ENCODE measurements at regions of chr14 and their contacts with region 1.

Region 1: GRCh38 chr14:63727774-63728728 is at the start of gene SGPP1:
- DNase-seq: no peak
- ATAC-seq: peak; percentile 84
- H3K4me3 ChIP-seq: peak within 1 kb of the TSS; percentile 91
- H3K27ac ChIP-seq: peak within 1 kb of the TSS; percentile 60
- H3K4me1 ChIP-seq: peaks cover 3% of the 10 kb centered on the region; the same call in 1 of the 2 replicates
- H3K27me3 ChIP-seq: no peaks in the 10 kb centered on the region
- CTCF ChIP-seq: peak; percentile 39 to 59 (median 49); a peak in 5 of 6 replicates
- EP300 ChIP-seq: peak in 1 of 2 experiments; percentile 12; a peak in 1 of 4 replicates
- POLR2A ChIP-seq: peak; percentile 92
- RAD21 ChIP-seq: peak; percentile 49
- polyA plus RNA-seq, gene SGPP1: 8.8 to 17.1 TPM

Region 2: GRCh38 chr14:63388763-63389431 is 339.2 kb before region 1 on chr14:
- CTCF ChIA-PET with region 1: interaction called, 11 read pairs
- POLR2A ChIA-PET with region 1: no interaction called
- RAD21 ChIA-PET with region 1: interaction called, 9 read pairs
- SMC1A ChIA-PET with region 1: interaction called, 5 read pairs
- in situ Hi-C with region 1: no loop called
- intact Hi-C with region 1: loop called (anchors 5 kb)
- DNase-seq: peak; percentile 24
- ATAC-seq: peak; percentile 98
- H3K4me3 ChIP-seq: no peak overlapping the region
- H3K27ac ChIP-seq: no peak overlapping the region
- H3K4me1 ChIP-seq: peaks cover 2% of the 10 kb centered on the region; the same call in 1 of the 2 replicates
- H3K27me3 ChIP-seq: no peaks in the 10 kb centered on the region
- CTCF ChIP-seq: peak; percentile 88 to 89 (median 88)
- EP300 ChIP-seq: no peak
- POLR2A ChIP-seq: no peak
- RAD21 ChIP-seq: peak; percentile 96

Region 3: DNA sequence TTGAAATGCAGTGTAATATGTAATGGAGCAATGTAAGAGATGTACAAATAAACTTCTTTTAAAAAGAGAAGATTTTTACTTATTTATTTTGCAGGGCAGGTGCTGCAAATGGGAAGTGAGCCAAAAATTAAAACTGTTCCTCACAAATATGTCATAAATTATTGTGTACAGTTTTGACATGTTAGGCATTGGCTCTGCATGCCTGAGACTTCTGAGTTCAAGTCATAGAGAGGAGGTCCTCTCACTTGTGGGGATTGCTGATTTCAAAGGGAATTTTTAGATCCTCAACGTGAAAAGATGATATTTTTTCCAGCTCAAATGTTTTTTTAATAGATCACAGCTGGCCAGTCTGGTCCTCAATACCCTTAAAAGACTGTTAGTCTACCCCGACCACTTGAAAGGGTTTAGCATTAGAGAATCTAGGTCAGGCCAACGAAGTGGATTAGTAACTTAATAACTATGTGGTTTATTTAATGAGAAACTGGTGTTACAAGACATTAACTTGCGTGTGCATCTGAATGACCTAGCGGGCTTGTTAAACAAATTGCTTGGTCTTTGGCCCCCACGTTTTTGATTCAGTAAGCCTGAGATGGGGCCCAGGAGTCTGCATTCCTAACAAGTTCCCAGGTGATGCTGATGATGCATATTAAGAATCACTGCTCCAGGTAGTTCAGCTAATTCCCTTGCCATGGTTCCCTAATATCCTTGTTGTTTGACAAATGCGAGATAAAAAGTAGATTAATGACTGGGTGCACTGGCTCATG is 55.5 kb before region 1 on chr14:
- CTCF ChIA-PET with region 1: interaction called, 4 read pairs
- POLR2A ChIA-PET with region 1: interaction called, 5 read pairs
- RAD21 ChIA-PET with region 1: interaction called, 7 read pairs
- SMC1A ChIA-PET with region 1: interaction called, 17 read pairs
- in situ Hi-C with region 1: no loop called
- intact Hi-C with region 1: no loop called
- DNase-seq: peak; percentile 62
- ATAC-seq: peak; percentile 90
- H3K4me3 ChIP-seq: no peak overlapping the region
- H3K27ac ChIP-seq: no peak overlapping the region
- H3K4me1 ChIP-seq: no peaks in the 10 kb centered on the region
- H3K27me3 ChIP-seq: no peaks in the 10 kb centered on the region
- CTCF ChIP-seq: no peak
- EP300 ChIP-seq: peak; percentile 41 to 73; a peak in 2 of 4 replicates
- POLR2A ChIP-seq: no peak
- RAD21 ChIP-seq: no peak

Region 4: DNA sequence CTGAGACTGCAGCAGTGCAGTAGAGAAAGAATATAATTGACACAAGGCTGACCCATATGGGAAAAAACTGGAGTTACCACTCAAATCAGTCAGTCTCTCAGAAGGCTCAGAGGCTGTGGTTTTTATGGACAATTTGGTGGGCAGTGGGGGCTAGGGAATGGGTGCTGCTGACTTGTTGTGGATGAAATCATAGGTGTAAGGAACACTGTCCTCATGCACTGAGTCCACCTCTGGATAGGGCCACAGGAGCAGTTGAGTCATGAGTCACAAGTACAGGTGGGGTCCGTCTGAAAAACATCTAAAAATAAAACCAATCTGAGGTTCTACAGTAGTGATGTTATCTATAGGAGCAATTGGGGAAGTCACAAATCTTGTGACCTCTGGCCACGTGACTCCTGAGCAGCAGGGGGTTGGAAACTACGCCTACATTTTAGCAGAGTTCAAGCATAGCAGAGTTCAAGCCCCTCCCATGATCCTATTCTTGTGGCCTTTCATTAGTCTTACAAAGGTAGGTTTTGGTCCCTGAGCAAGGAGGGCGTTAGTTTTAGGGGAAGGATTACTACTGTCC is 17.9 kb after region 1 on chr14:
- CTCF ChIA-PET with region 1: interaction called, 12 read pairs
- POLR2A ChIA-PET with region 1: interaction called, 51 read pairs
- RAD21 ChIA-PET with region 1: interaction called, 64 read pairs
- SMC1A ChIA-PET with region 1: interaction called, 52 read pairs
- in situ Hi-C with region 1: no loop called
- intact Hi-C with region 1: no loop called
- DNase-seq: peak; percentile 80
- ATAC-seq: peak; percentile 76
- H3K4me3 ChIP-seq: no peak overlapping the region
- H3K27ac ChIP-seq: peak overlapping the region; percentile 75
- H3K4me1 ChIP-seq: peaks cover 36% of the 10 kb centered on the region
- H3K27me3 ChIP-seq: no peaks in the 10 kb centered on the region
- CTCF ChIP-seq: peak in 2 of 3 experiments; percentile 8 to 9; a peak in 1 of 6 replicates
- EP300 ChIP-seq: peak; percentile 38 to 65; a peak in 3 of 4 replicates
- POLR2A ChIP-seq: 0 out of 2 replicates have a peak, but pooled peaks have one; percentile 33
- RAD21 ChIP-seq: 0 out of 2 replicates have a peak, but pooled peaks have one; percentile 31

Region 5: DNA sequence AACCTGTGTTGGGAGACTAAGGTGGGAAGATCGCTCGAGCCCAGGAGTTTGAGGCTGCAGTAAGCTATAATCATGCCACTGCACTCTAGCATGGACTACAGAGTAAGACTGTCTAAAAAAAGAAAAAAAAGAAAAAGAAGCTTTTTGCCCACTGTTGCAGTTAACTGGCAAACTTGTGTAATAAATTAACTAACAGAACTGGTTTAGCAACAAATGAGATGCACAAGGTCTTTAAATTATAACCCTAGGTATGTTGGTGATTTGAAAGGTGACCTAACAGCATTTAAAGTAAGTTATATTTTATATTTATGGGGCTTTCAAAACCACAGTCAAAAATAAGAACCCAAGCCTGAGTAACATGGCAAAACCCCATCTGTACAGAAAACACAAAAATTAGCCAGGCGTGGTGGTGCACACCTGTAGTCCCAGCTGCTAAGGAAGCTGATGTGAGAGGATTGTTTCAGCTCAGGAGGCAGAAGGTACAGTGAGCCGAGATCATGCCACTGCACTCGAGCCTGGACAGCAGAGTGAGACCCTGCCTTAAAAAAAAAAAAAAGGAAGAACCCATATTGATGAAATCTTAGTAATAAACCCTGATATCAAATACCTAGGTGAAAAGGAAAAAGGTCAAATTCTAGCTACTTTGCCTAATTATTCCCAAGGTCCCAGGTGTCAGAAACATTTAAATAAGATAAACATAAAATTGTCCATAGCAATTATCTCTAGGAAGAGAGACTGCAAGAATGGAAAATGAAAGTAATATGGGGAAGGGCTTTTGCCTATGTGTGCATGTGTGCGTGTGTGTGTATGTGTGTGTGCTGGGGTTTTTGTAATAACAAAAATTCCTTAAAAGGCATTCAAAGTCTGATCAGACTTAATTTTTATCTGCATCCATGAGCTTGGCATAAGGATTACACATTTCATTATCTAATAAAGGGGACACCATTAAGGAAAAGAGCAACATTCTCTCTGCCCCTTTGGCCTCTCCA is 140.2 kb after region 1 on chr14:
- CTCF ChIA-PET with region 1: no interaction called
- POLR2A ChIA-PET with region 1: no interaction called
- RAD21 ChIA-PET with region 1: no interaction called
- SMC1A ChIA-PET with region 1: interaction called, 3 read pairs
- in situ Hi-C with region 1: no loop called
- intact Hi-C with region 1: loop called (anchors 10 kb)
- DNase-seq: peak; percentile 56
- ATAC-seq: peak; percentile 5
- H3K4me3 ChIP-seq: peak overlapping the region; percentile 34; the same call in 1 of the 2 replicates
- H3K27ac ChIP-seq: peak overlapping the region; percentile 69
- H3K4me1 ChIP-seq: peaks cover 57% of the 10 kb centered on the region
- H3K27me3 ChIP-seq: no peaks in the 10 kb centered on the region
- CTCF ChIP-seq: no peak
- EP300 ChIP-seq: no peak
- POLR2A ChIP-seq: no peak
- RAD21 ChIP-seq: no peak

Measured in GM12878 (cell line).